ENCODE measurements at regions of chr5 and their contacts with region 1.

Region 1: GRCh38 chr5:72280581-72281170 is 39.4 kb downstream of the MRPS27 start:
- DNase-seq: peak; percentile 19
- CTCF ChIP-seq: peak; percentile 35

Region 2: DNA sequence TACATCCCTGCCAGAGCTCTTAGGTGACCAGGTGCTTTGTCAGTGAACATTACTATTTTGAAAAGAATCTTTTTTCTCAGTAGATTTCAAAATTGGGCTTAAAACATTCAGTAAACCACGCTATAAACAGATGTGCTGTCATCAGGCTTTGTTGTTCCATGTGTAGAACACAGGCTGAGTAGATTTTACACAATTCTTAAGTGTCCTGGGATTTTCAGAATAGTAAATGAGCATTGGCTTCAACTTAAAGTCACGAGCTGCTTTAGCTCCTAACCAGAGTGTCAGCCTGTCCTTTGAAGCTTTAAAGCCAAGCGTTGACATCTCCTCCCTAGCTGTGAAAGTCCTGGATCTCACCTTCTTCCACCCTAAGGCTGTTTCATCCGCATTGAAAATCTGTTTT is 478.0 kb before region 1 on chr5:
- CTCF ChIA-PET with region 1: no interaction called
- POLR2A ChIA-PET with region 1: no interaction called
- DNase-seq: no peak
- CTCF ChIP-seq: no peak

Region 3: GRCh38 chr5:72036951-72037350 is 243.7 kb before region 1 on chr5:
- CTCF ChIA-PET with region 1: no interaction called
- POLR2A ChIA-PET with region 1: no interaction called
- DNase-seq: no peak
- CTCF ChIP-seq: no peak

Region 4: DNA sequence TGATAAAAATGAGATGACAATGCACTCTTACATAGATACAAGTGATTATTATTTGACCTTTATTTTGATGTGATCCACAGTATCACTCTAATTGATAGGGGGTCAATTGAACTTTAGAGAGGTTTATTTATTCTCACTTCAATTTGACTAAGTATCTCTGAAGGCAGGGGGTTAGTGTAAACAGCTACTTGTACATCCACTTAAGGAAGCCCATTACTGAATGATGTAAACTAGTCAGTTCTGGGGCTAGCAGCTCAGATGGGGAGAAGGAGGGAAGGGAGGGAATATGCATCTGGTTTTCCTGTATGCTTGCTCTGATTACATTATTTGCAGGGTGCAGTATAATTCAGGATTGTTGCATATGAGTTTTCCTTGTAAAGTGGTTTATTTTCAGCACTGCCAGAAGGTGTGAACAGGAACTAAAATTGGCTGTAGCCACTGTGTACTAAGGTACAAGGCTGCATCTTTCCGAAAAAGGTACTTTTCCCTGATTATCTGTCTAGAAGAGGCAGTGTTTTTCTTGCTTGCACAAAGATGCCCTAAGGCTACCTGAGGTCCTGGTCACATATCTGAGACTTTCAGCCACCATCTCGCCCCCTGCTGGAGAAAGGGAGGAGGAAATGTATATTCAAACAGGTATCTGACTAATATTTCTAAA is 11.8 kb before region 1 on chr5:
- CTCF ChIA-PET with region 1: interaction called, 98 read pairs
- POLR2A ChIA-PET with region 1: no interaction called
- DNase-seq: peak; percentile 38
- CTCF ChIP-seq: peak; percentile 57

Region 5: GRCh38 chr5:72296256-72296655 is 15.6 kb after region 1 on chr5:
- CTCF ChIA-PET with region 1: interaction called, 14 read pairs
- POLR2A ChIA-PET with region 1: interaction called, 9 read pairs
- DNase-seq: no peak
- CTCF ChIP-seq: no peak

Region 6: DNA sequence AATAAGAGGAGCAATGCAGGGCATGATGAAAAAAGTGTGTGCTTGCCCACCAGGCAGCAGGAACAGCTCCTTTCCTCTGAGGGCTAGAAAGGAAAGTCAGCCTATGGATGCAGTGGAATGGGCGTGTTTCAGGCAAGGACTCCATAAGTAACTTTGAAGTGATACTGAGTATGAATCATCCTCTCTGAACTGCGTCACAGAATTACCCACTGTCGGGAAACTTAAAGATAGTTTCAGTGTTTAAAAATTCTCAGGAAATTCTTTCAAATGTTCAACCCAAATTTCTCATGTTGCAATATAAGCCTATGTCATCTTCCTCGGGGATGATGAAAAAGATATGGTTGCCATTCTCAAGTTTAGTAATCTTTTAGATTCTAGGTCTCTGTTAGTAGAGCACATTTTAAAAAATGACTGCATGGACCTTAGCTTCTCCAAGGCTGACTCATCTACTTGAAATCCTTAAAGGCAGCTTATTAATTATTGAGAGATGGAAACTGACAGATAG is 67.2 kb after region 1 on chr5:
- CTCF ChIA-PET with region 1: no interaction called
- POLR2A ChIA-PET with region 1: no interaction called
- DNase-seq: no peak
- CTCF ChIP-seq: no peak

Region 7: DNA sequence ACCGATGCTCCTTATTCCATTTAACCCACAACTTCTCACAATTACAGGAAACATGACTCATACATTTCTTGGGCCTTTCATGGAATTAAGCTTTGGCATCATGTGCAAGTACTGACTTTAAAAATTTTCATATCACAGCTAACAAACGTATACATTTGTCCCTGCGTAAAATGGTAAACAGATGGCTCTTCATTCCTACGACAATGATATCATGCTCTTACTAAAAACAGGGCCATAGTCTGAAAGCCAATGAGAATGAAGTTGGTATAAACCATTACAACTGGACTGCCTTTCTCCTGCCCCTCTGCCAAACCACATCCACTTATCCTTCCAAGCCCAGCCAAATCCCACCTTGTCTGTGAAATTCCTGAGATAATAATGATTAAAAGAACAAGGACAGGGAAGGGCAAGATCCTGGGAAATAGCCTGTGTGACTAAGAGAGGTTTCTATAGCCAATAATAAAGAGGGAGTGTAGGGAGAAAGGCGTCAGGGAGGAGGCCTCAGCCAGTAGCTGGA is 271.4 kb after region 1 on chr5:
- CTCF ChIA-PET with region 1: no interaction called
- POLR2A ChIA-PET with region 1: no interaction called
- DNase-seq: no peak
- CTCF ChIP-seq: no peak

Measured in GM10248 (cell line).